MCF 10A (cell line): ENCODE measurements at regions of chr17 and their contacts with region 1.

Region 1: DNA sequence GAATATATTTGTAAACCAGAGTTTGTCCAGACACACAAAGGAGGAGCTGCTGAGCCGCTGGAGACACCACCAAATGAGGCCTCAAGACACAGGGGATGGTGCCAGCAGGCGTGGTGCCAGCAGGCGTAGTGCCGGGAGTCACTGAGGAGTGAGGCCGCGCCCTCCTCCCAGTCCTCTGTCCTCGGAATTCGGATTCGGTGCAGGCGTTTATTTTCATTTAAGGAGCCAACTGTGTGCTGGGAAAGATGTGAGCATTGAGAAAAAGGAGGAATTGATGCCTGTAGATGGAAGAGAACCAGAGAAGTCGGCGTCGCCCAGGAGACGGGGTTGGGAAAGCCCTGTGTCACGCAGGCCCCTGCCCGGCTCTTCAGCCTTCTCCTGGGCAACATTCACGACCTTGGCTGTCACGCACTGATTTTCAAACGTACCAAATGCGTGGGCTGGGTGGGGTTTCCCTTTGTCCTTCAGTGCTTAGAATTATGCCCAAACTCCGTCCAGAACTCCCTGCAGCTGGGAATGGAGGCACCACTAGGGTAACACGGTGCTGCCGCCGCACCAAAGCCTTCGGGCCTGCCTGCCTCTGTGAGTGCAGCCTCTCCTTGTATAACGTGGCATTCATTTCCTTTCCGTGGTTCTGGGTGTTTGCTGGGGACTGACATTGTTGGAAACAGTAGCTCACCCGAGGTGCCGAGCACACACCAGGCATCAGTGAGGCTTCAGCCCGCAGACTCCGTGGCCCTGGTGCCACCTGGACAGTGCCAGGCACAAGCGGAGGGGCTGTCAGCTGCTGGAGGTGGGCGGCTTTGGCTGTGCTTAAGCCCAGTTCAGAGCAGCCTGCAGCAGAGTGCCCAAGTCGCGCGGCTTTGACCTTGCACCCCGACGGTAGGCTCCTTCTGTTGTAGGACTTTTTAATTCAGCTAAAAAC is 49.0 kb upstream of the CHMP6 start:
- DNase-seq: peak; percentile 86
- H3K4me3 Mint-ChIP-seq: no peak overlapping the region
- H3K27ac Mint-ChIP-seq: no peak overlapping the region
- H3K4me1 Mint-ChIP-seq: peaks cover 6% of the 10 kb centered on the region
- H3K27me3 Mint-ChIP-seq: no peaks in the 10 kb centered on the region
- CTCF ChIP-seq: no peak

Region 2: GRCh38 chr17:80970044-80970761 is 27.5 kb after region 1 on chr17:
- CTCF ChIA-PET with region 1: no interaction called
- POLR2A ChIA-PET with region 1: no interaction called
- intact Hi-C with region 1: loop called (anchors 1 kb)
- DNase-seq: peak; percentile 36
- H3K4me3 Mint-ChIP-seq: no peak overlapping the region
- H3K27ac Mint-ChIP-seq: no peak overlapping the region
- H3K4me1 Mint-ChIP-seq: no peaks in the 10 kb centered on the region
- H3K27me3 Mint-ChIP-seq: no peaks in the 10 kb centered on the region
- CTCF ChIP-seq: peak; percentile 9